HepG2 (cell line): ENCODE measurements at regions of chr10 and their contacts with region 1.

Region 1: GRCh38 chr10:92699518-92700381 is 10.0 kb downstream of the HHEX start:
- DNase-seq: no peak
- ATAC-seq: no peak
- H3K4me3 ChIP-seq: no peak overlapping the region
- H3K27ac ChIP-seq: no peak overlapping the region
- H3K4me1 ChIP-seq: peaks cover 55% of the 10 kb centered on the region
- H3K27me3 ChIP-seq: no peaks in the 10 kb centered on the region
- CTCF ChIP-seq: no peak
- EP300 ChIP-seq: no peak
- POLR2A ChIP-seq: no peak
- RAD21 ChIP-seq: no peak

Region 2: DNA sequence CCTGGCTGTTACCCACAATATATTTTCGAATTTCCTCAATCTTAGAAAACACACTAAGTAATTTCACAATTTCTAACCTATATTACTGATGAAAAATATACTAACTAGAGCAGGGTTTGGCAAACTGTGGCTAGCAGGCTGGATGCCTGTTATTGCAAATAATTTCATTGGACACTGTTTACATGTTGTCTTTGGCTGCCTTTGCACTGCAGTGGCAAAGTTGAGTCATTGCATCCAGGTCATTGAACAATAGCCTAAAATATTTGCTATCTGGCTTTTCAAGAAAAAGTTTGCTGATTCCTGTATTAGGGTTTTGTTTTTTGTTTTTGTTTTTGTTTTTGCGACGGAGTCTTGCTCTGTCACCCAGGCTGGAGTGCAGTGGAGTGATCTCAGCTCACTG is 59.6 kb before region 1 on chr10:
- CTCF ChIA-PET with region 1: no interaction called
- POLR2A ChIA-PET with region 1: no interaction called
- in situ Hi-C with region 1: no loop called
- intact Hi-C with region 1: no loop called
- DNase-seq: no peak
- ATAC-seq: no peak
- H3K4me3 ChIP-seq: no peak overlapping the region
- H3K27ac ChIP-seq: no peak overlapping the region
- H3K4me1 ChIP-seq: peaks cover 8% of the 10 kb centered on the region
- H3K27me3 ChIP-seq: no peaks in the 10 kb centered on the region
- CTCF ChIP-seq: no peak
- EP300 ChIP-seq: no peak
- POLR2A ChIP-seq: no peak
- RAD21 ChIP-seq: no peak

Region 3: GRCh38 chr10:92757066-92757710 is 57.4 kb after region 1 on chr10:
- CTCF ChIA-PET with region 1: no interaction called
- POLR2A ChIA-PET with region 1: interaction called, 3 read pairs
- in situ Hi-C with region 1: no loop called
- intact Hi-C with region 1: loop called (anchors 1 kb)
- DNase-seq: peak; percentile 72
- ATAC-seq: peak; percentile 87
- H3K4me3 ChIP-seq: peak overlapping the region; percentile 17 to 60 (median 37); a peak in 5 of 6 replicates
- H3K27ac ChIP-seq: peak overlapping the region; percentile 41
- H3K4me1 ChIP-seq: peaks cover 64% of the 10 kb centered on the region
- H3K27me3 ChIP-seq: 0 out of 5 replicates have a peak, but pooled peaks cover 0 to 2% of the 10 kb centered on the region in 2 experiments
- CTCF ChIP-seq: peak; percentile 51
- EP300 ChIP-seq: no peak
- POLR2A ChIP-seq: no peak
- RAD21 ChIP-seq: 0 out of 2 replicates have a peak, but pooled peaks have one; percentile 29

Region 4: DNA sequence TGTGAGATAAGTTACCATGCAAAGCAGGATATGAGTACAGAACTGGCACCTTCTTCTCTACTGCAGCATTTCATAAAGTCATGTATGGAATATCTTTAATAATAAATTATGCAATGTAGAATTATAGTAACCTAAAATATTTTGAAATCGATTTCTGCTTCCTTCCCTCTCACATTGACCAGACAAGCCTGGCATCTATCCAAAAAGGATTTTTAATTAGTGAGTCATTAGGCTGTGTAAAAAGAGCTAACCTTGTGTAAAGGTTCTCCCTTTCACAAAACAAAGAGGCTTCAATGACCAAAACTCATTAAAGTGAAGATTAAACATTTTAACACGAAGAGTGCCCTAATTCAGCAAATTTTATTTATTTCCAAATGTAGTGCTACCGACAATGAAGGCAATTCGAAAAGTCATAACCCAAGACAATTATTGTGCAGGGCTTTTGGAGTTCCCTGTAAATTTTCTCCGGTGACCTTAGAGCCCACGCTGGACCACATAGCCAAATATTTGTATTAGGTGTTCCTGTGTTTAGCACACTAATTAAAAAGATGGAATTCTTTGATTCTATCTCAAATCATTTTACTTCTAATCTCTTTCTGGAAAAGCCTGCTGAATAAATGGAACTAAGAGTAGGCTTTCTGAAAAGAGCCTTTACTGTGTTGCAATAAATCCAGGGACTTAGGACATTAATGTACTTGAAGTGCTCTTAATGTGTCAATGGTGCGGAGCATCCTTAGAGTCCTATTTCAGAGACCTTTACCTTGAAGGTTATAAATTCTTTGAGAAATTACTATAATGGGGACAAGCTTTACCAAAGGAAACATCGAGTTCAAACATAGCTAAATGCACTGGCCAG is 100.1 kb after region 1 on chr10:
- CTCF ChIA-PET with region 1: no interaction called
- POLR2A ChIA-PET with region 1: no interaction called
- in situ Hi-C with region 1: no loop called
- intact Hi-C with region 1: loop called (anchors 10 kb)
- DNase-seq: no peak
- ATAC-seq: no peak
- H3K4me3 ChIP-seq: no peak overlapping the region
- H3K27ac ChIP-seq: no peak overlapping the region
- H3K4me1 ChIP-seq: peaks cover 14% of the 10 kb centered on the region
- H3K27me3 ChIP-seq: no peaks in the 10 kb centered on the region
- CTCF ChIP-seq: no peak
- EP300 ChIP-seq: no peak
- POLR2A ChIP-seq: no peak
- RAD21 ChIP-seq: no peak

Region 5: DNA sequence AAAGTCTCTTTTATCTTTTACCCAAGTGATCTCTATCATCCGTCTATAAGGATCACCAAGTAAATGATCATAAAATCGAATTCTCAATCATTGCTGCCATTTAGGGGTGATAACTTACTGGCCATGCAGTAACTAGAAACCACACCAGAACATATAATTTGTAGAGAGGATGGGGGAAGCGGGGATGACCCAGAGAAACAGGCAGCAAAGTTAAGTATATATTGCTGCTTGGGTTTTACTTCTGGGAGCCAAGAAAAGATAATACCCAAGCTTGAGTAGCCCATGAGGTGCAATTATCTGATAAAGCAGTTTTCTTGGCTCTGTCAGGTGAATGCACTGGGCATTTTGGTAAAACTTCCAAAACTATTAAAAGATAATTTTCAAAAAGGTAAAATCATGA is 167.5 kb after region 1 on chr10:
- CTCF ChIA-PET with region 1: no interaction called
- POLR2A ChIA-PET with region 1: no interaction called
- in situ Hi-C with region 1: no loop called
- intact Hi-C with region 1: no loop called
- DNase-seq: no peak
- ATAC-seq: no peak
- H3K4me3 ChIP-seq: no peak overlapping the region
- H3K27ac ChIP-seq: no peak overlapping the region
- H3K4me1 ChIP-seq: peaks cover 2% of the 10 kb centered on the region; the same call in 1 of the 2 replicates
- H3K27me3 ChIP-seq: no peaks in the 10 kb centered on the region
- CTCF ChIP-seq: no peak
- EP300 ChIP-seq: no peak
- POLR2A ChIP-seq: no peak
- RAD21 ChIP-seq: no peak